Caco-2 (cell line): ENCODE measurements at regions of chr2 and their contacts with region 1.

Region 1: DNA sequence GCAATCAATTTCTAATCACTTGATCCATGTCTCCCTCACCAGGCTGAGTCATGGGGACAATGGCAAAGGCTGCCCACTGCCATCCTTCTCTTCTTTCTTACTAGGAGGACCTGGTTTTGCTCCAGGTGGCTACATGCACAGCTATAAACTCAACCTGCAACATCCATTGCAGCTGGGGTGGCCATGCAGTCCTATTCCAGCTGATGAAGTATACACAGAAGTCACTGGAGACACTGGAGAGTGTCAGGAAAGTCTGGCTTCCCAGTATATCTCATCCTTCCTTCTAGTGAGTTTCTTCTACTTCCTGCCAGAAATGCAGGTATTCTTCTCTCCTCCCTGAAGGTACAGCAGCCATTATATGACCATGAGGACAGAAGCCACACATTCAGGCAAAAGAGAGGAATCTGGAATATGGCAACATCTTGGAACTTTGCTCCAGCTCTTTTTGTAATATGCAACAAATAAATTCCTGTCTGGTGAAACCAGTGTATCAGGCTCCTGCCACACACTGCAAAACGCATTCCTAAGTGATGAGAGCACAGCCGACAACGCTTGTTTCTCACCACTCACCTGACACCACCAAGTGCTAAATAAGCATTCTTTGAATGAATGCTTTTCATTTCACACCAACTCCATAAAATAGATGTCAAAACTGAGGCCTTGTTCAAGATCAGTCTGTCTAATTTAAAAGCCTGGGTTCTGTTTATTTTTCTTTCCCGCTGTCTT is 32.3 kb downstream of the SCTR start:
- DNase-seq: peak; percentile 86 to 92
- H3K4me3 ChIP-seq: no peak overlapping the region
- H3K4me3 Mint-ChIP-seq: peak overlapping the region; percentile 39
- H3K27ac Mint-ChIP-seq: peak overlapping the region; percentile 96
- H3K4me1 ChIP-seq: peaks cover 60% of the 10 kb centered on the region
- H3K4me1 Mint-ChIP-seq: peaks cover 53% of the 10 kb centered on the region
- H3K27me3 ChIP-seq: no peaks in the 10 kb centered on the region
- H3K27me3 Mint-ChIP-seq: no peaks in the 10 kb centered on the region
- CTCF ChIP-seq: no peak

Region 2: DNA sequence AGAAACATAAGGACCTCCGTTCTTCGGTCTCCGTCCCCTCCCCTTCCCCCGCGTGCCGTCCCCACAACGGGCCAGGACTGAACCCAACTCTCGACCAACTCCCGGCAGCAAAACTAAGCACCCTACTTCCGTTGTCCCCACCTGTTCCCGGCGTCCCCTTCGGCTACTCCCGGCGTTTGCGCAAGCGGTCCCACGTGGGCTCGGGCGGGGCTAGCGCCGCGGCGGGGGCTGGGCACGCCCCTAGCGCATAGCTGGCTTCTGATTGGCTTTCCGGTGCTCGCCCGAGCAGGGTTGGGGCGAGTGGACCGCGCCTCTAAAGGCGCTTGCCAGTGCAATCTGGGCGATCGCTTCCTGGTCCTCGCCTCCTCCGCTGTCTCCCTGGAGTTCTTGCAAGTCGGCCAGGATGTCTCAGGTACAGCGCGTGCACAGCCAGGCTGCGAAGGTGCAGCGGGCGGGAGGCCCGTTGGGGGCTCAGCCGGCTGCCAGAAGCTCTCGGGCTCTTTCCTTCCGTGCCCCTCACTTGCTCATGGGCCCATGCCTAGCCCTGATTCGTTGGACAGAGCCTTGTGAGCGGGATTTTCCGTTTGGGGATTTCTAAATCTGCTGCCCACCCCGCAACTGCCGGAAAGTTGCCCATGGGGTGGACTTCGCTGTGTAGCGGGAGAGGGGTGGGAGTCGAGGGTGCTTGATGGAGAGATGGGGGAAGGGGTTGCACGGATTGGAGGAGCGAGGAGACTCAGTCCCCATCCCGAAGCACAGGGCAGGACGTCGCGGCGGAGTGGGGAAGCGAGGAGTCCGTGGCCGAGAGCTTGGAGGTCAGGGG is 125.1 kb before region 1 on chr2 and contains the starts of genes C2orf76 and DBI:
- CTCF ChIA-PET with region 1: no interaction called
- POLR2A ChIA-PET with region 1: no interaction called
- intact Hi-C with region 1: loop called (anchors 1 kb)
- DNase-seq: peak; percentile 96 to 97
- H3K4me3 ChIP-seq: peak within 1 kb of the TSS; percentile 89
- H3K4me3 Mint-ChIP-seq: peak within 1 kb of the TSS; percentile 99
- H3K27ac Mint-ChIP-seq: peak within 1 kb of the TSS; percentile 37
- H3K4me1 ChIP-seq: peaks cover 5% of the 10 kb centered on the region; the same call in 1 of the 2 replicates
- H3K4me1 Mint-ChIP-seq: peaks cover 12% of the 10 kb centered on the region
- H3K27me3 ChIP-seq: no peaks in the 10 kb centered on the region
- H3K27me3 Mint-ChIP-seq: no peaks in the 10 kb centered on the region
- CTCF ChIP-seq: no peak
- total RNA-seq, gene C2orf76: 5.0 and 6.5 TPM in 2 replicates
- total RNA-seq, gene DBI: 256 and 257 TPM in 2 replicates

Region 3: DNA sequence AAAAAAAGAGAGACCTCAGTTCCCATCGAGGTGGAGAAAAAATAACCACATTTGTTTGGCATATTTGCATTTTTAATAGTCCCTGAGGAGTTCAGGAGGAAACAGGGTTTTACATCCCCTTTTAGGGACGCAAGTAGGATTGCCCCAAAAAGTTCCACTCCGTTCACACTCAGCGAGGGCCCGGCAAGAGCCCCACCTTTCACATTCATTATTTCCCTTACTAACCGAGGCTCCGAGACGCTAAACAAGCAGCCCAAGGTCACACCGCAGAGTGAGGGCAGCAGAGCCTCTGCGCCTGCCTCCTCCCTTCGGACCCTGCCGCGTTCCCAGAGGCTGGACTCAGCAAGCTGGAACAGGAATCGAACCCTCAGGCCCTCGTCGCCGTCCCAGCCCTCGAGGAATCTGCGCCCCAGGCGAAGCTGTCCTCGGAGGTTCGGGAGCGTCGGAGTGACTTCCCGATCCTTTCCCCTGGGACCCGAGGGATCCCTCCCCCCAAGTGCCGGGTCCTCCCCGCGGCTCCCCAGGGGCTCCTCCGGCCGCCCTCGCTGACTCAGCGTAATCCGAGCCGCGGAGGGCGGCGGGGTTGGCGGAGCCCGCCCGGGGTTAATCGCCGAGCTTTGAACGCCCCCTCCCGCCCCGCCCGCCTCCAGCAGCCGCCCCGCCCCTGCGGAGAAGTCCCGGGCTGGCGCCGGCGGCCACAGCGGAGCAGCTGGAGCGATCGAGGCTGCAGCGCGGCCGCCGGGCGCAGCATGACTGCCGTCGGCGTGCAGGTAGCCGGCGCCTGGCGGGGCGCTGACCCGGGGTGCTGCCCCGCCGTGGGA is 60.6 kb before region 1 on chr2 and contains the start of gene TMEM37:
- CTCF ChIA-PET with region 1: no interaction called
- POLR2A ChIA-PET with region 1: interaction called, 5 read pairs
- intact Hi-C with region 1: loop called (anchors 5 kb)
- DNase-seq: peak; percentile 87 to 90
- H3K4me3 ChIP-seq: peak within 1 kb of the TSS; percentile 63
- H3K4me3 Mint-ChIP-seq: peak within 1 kb of the TSS; percentile 78
- H3K27ac Mint-ChIP-seq: peak within 1 kb of the TSS; percentile 85
- H3K4me1 ChIP-seq: peaks cover 80% of the 10 kb centered on the region
- H3K4me1 Mint-ChIP-seq: peaks cover 53% of the 10 kb centered on the region
- H3K27me3 ChIP-seq: no peaks in the 10 kb centered on the region
- H3K27me3 Mint-ChIP-seq: no peaks in the 10 kb centered on the region
- CTCF ChIP-seq: no peak
- total RNA-seq, gene TMEM37: 13.8 and 15.8 TPM in 2 replicates

Region 4: GRCh38 chr2:119544075-119544938 is 52.3 kb after region 1 on chr2 and contains the start of gene CFAP221:
- CTCF ChIA-PET with region 1: no interaction called
- POLR2A ChIA-PET with region 1: no interaction called
- intact Hi-C with region 1: loop called (anchors 1 kb)
- DNase-seq: peak; percentile 85 to 88
- H3K4me3 ChIP-seq: peak within 1 kb of the TSS; percentile 54
- H3K4me3 Mint-ChIP-seq: peak within 1 kb of the TSS; percentile 78
- H3K27ac Mint-ChIP-seq: no peak within 1 kb of the TSS
- H3K4me1 ChIP-seq: peaks cover 47% of the 10 kb centered on the region
- H3K4me1 Mint-ChIP-seq: peaks cover 29% of the 10 kb centered on the region
- H3K27me3 ChIP-seq: no peaks in the 10 kb centered on the region
- H3K27me3 Mint-ChIP-seq: no peaks in the 10 kb centered on the region
- CTCF ChIP-seq: no peak
- total RNA-seq, gene CFAP221: 0.60 TPM in 1 of 2 replicates, not detected in the other

Region 5: GRCh38 chr2:119574108-119574815 is 82.3 kb after region 1 on chr2:
- CTCF ChIA-PET with region 1: no interaction called
- POLR2A ChIA-PET with region 1: no interaction called
- intact Hi-C with region 1: no loop called
- DNase-seq: no peak
- H3K4me3 ChIP-seq: no peak overlapping the region
- H3K4me3 Mint-ChIP-seq: no peak overlapping the region
- H3K27ac Mint-ChIP-seq: no peak overlapping the region
- H3K4me1 ChIP-seq: no peaks in the 10 kb centered on the region
- H3K4me1 Mint-ChIP-seq: no peaks in the 10 kb centered on the region
- H3K27me3 ChIP-seq: no peaks in the 10 kb centered on the region
- H3K27me3 Mint-ChIP-seq: peaks cover 5% of the 10 kb centered on the region
- CTCF ChIP-seq: no peak